ENCODE measurements at regions of chr1 and their contacts with region 1.

Region 1: DNA sequence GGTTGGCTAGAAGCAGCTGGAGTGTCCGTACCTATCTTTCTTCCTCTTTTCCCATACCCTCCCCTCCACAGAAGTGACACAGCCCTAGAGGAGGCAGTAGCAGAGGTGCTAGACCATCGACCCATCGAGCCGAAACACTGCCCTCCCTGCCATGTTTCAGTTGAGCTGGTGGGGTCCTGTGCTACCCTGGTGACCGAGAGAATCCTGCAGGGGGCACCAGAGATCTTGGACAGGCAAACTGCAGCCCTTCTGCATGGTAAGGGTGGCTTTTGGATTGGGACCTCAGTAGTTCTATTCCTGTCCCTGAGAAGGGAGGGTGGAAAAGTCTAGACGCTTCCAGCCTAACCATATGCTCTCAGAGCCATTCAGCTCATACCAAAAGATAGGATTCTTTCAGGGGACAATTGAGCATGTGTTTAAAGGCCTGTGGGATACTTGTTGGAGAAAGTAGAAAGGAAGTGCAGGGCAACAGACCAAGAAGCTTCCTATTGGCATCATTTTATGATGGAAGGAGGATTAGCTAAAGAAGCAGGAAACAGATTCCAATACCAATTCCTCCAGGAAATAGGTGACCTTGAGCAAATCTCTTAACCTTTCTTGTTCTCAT is 11.7 kb upstream of the BNIPL start:
- DNase-seq: peak; percentile 81 to 95 (median 88)
- ATAC-seq: peak; percentile 100
- H3K4me3 ChIP-seq: no peak overlapping the region
- H3K4me3 Mint-ChIP-seq: no peak overlapping the region
- H3K27ac ChIP-seq: no peak overlapping the region
- H3K27ac Mint-ChIP-seq: peak overlapping the region; percentile 52
- H3K4me1 ChIP-seq: peaks cover 7% of the 10 kb centered on the region
- H3K4me1 Mint-ChIP-seq: peaks cover 6% of the 10 kb centered on the region
- H3K27me3 ChIP-seq: no peaks in the 10 kb centered on the region
- H3K27me3 Mint-ChIP-seq: no peaks in the 10 kb centered on the region
- CTCF ChIP-seq: peak; percentile 83

Region 2: DNA sequence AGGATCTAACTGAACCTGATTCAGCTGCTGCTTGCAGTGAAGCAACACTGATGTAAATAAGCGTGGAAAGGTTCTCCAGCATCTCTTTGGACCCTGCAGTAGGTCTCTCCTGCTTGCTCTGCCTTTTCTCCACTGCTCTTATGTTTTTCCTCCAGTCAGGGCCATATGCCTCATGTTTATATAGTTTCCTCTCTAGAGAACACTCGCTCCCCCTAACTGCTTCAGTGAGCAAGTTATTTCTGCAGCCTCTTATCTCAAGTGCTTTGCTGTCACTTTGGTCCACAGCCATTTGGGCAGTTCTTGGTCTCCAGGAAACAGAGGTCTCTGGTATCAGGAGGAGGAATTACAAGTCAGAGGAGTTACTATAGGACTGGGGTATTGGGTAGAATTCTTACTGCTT is 11.1 kb before region 1 on chr1:
- CTCF ChIA-PET with region 1: interaction called, 14 read pairs
- POLR2A ChIA-PET with region 1: interaction called, 5 read pairs
- intact Hi-C with region 1: no loop called
- DNase-seq: no peak
- ATAC-seq: no peak
- H3K4me3 ChIP-seq: no peak overlapping the region
- H3K4me3 Mint-ChIP-seq: peak overlapping the region; percentile 1
- H3K27ac ChIP-seq: no peak overlapping the region
- H3K27ac Mint-ChIP-seq: no peak overlapping the region
- H3K4me1 ChIP-seq: peaks cover 41% of the 10 kb centered on the region
- H3K4me1 Mint-ChIP-seq: peaks cover 51% of the 10 kb centered on the region
- H3K27me3 ChIP-seq: no peaks in the 10 kb centered on the region
- H3K27me3 Mint-ChIP-seq: no peaks in the 10 kb centered on the region
- CTCF ChIP-seq: no peak

Region 3: DNA sequence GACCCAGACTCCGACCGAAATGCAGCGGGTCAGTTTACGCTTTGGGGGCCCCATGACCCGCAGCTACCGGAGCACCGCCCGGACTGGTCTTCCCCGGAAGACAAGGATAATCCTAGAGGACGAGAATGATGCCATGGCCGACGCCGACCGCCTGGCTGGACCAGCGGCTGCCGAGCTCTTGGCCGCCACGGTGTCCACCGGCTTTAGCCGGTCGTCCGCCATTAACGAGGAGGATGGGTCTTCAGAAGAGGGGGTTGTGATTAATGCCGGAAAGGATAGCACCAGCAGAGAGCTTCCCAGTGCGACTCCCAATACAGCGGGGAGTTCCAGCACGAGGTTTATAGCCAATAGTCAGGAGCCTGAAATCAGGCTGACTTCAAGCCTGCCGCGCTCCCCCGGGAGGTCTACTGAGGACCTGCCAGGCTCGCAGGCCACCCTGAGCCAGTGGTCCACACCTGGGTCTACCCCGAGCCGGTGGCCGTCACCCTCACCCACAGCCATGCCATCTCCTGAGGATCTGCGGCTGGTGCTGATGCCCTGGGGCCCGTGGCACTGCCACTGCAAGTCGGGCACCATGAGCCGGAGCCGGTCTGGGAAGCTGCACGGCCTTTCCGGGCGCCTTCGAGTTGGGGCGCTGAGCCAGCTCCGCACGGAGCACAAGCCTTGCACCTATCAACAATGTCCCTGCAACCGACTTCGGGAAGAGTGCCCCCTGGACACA is 23.4 kb after region 1 on chr1:
- CTCF ChIA-PET with region 1: interaction called, 14 read pairs
- POLR2A ChIA-PET with region 1: interaction called, 16 read pairs
- intact Hi-C with region 1: no loop called
- DNase-seq: peak; percentile 28 to 84 (median 51)
- ATAC-seq: peak; percentile 77
- H3K4me3 ChIP-seq: peak overlapping the region; percentile 84
- H3K4me3 Mint-ChIP-seq: peak overlapping the region; percentile 93
- H3K27ac ChIP-seq: peak overlapping the region; percentile 65 to 73
- H3K27ac Mint-ChIP-seq: peak overlapping the region; percentile 90
- H3K4me1 ChIP-seq: peaks cover 55% of the 10 kb centered on the region
- H3K4me1 Mint-ChIP-seq: peaks cover 78% of the 10 kb centered on the region
- H3K27me3 ChIP-seq: no peaks in the 10 kb centered on the region
- H3K27me3 Mint-ChIP-seq: no peaks in the 10 kb centered on the region
- CTCF ChIP-seq: peak; percentile 52

Region 4: DNA sequence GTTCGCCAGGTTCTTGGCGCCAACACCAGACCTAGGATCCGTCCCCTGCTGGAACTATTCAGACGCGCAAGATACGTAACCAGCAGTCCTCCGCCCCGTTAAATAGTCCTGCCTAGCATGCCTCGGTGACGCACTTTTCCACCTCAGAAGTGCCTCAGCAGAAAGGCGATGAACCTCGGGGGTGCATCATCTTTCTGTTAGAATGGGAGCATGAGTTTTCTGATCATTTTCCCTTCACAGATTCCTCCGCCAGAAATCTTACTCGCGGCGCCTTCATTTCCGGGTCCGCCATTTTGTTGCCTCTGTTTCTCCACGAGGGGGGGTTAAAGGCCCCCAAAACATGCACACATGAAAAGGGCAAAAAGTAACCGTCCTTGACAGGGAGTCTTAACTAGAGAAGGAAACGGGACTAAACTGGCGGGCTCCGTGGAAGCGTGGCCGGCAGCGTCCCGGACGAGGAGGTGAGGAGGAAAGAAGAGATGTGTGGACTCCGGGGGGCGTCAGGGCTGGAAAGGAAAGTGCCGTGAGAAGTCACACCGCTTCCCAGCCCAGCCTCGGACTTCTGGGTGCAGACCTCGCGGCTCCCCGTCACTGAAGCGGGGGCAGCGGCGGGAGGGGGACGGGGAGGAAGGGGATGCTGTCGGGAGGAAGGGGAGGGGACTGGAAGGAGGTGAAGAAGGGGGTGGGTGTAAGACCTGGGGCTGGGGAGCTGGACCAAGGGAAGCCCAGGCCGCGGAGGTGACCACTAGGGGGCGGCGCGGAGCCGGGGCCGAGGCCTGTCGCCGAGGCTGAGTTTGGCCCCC is 46.0 kb after region 1 on chr1 and contains the start of gene GABPB2:
- CTCF ChIA-PET with region 1: interaction called, 45 read pairs
- POLR2A ChIA-PET with region 1: interaction called, 6 read pairs
- intact Hi-C with region 1: loop called (anchors 1 kb)
- DNase-seq: peak; percentile 77 to 95 (median 82)
- ATAC-seq: peak; percentile 80
- H3K4me3 ChIP-seq: peak within 1 kb of the TSS; percentile 87
- H3K4me3 Mint-ChIP-seq: peak within 1 kb of the TSS; percentile 99
- H3K27ac ChIP-seq: peak within 1 kb of the TSS; percentile 94 to 98
- H3K27ac Mint-ChIP-seq: peak within 1 kb of the TSS; percentile 98
- H3K4me1 ChIP-seq: peaks cover 31% of the 10 kb centered on the region
- H3K4me1 Mint-ChIP-seq: peaks cover 27% of the 10 kb centered on the region
- H3K27me3 ChIP-seq: no peaks in the 10 kb centered on the region
- H3K27me3 Mint-ChIP-seq: no peaks in the 10 kb centered on the region
- CTCF ChIP-seq: peak; percentile 93
- total RNA-seq, gene GABPB2: 23.7 to 25.5 TPM

Region 5: GRCh38 chr1:151175910-151176309 is 151.3 kb after region 1 on chr1 and contains the start of gene TMOD4:
- CTCF ChIA-PET with region 1: no interaction called
- POLR2A ChIA-PET with region 1: no interaction called
- intact Hi-C with region 1: no loop called
- DNase-seq: peak in 1 of 14 experiments; percentile 38
- ATAC-seq: peak; percentile 78
- H3K4me3 ChIP-seq: no peak within 1 kb of the TSS
- H3K4me3 Mint-ChIP-seq: no peak within 1 kb of the TSS
- H3K27ac ChIP-seq: no peak within 1 kb of the TSS
- H3K27ac Mint-ChIP-seq: peak within 1 kb of the TSS; percentile 12
- H3K4me1 ChIP-seq: no peaks in the 10 kb centered on the region
- H3K4me1 Mint-ChIP-seq: no peaks in the 10 kb centered on the region
- H3K27me3 ChIP-seq: no peaks in the 10 kb centered on the region
- H3K27me3 Mint-ChIP-seq: no peaks in the 10 kb centered on the region
- CTCF ChIP-seq: peak; percentile 57
- total RNA-seq, gene TMOD4: 1.6 TPM in 1 of 2 experiments, not detected in the other

Region 6: DNA sequence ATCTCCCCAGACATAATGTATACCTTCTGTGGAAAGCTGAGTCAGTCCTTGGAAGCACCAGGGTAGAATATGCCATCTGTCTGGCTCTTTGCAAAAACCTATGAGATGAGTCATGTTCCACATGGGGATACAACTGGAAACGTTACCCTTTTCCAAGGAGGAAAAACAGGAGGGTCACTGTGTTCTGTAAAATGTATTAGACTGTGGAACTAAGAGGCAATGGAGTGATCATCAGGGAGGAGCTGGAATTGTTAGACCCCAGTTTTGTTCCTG is 213.8 kb after region 1 on chr1:
- CTCF ChIA-PET with region 1: no interaction called
- POLR2A ChIA-PET with region 1: no interaction called
- intact Hi-C with region 1: loop called in 1 of 2 experiments (anchors 5 kb)
- DNase-seq: no peak
- ATAC-seq: no peak
- H3K4me3 ChIP-seq: no peak overlapping the region
- H3K4me3 Mint-ChIP-seq: no peak overlapping the region
- H3K27ac ChIP-seq: no peak overlapping the region
- H3K27ac Mint-ChIP-seq: no peak overlapping the region
- H3K4me1 ChIP-seq: no peaks in the 10 kb centered on the region
- H3K4me1 Mint-ChIP-seq: no peaks in the 10 kb centered on the region
- H3K27me3 ChIP-seq: no peaks in the 10 kb centered on the region
- H3K27me3 Mint-ChIP-seq: no peaks in the 10 kb centered on the region
- CTCF ChIP-seq: no peak

Region 7: DNA sequence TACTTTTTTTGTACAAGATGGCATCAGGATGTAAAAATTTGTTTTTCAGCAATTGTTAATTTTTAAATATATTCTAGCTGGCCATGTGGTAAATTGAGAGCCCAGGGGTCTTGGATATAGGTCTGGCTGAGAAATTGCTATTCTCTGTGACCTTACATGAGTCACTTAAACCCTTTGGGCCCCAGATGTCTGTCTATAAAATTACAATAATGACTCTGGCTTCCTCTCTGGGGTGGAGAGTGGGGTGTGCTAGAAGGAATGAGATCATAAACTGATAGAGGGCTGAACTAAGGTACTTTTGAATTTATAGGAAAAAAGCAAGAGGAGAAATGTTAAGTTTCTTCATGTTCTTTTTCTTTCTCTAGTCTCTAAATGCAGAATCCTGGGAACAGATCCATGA is 1103.0 kb after region 1 on chr1:
- CTCF ChIA-PET with region 1: no interaction called
- POLR2A ChIA-PET with region 1: no interaction called
- intact Hi-C with region 1: no loop called
- DNase-seq: no peak
- ATAC-seq: no peak
- H3K4me3 ChIP-seq: no peak overlapping the region
- H3K4me3 Mint-ChIP-seq: no peak overlapping the region
- H3K27ac ChIP-seq: no peak overlapping the region
- H3K27ac Mint-ChIP-seq: no peak overlapping the region
- H3K4me1 ChIP-seq: no peaks in the 10 kb centered on the region
- H3K4me1 Mint-ChIP-seq: no peaks in the 10 kb centered on the region
- H3K27me3 ChIP-seq: peaks cover 42 to 63% of the 10 kb centered on the region in 2 experiments
- H3K27me3 Mint-ChIP-seq: peaks cover 73% of the 10 kb centered on the region
- CTCF ChIP-seq: no peak